ENCODE measurements at regions of chr17 and their contacts with region 1.

Region 1: GRCh38 chr17:82734987-82735866 is at the start of gene FN3K:
- DNase-seq: peak; percentile 64
- H3K4me3 ChIP-seq: peak within 1 kb of the TSS; percentile 45 to 81 (median 47)
- H3K27ac ChIP-seq: no peak within 1 kb of the TSS
- H3K4me1 ChIP-seq: no peaks in the 10 kb centered on the region
- H3K27me3 ChIP-seq: no peaks in the 10 kb centered on the region
- CTCF ChIP-seq: no peak
- POLR2A ChIP-seq: peak; percentile 59
- total RNA-seq, gene FN3K: 8.3 and 12.0 TPM in 2 replicates

Region 2: DNA sequence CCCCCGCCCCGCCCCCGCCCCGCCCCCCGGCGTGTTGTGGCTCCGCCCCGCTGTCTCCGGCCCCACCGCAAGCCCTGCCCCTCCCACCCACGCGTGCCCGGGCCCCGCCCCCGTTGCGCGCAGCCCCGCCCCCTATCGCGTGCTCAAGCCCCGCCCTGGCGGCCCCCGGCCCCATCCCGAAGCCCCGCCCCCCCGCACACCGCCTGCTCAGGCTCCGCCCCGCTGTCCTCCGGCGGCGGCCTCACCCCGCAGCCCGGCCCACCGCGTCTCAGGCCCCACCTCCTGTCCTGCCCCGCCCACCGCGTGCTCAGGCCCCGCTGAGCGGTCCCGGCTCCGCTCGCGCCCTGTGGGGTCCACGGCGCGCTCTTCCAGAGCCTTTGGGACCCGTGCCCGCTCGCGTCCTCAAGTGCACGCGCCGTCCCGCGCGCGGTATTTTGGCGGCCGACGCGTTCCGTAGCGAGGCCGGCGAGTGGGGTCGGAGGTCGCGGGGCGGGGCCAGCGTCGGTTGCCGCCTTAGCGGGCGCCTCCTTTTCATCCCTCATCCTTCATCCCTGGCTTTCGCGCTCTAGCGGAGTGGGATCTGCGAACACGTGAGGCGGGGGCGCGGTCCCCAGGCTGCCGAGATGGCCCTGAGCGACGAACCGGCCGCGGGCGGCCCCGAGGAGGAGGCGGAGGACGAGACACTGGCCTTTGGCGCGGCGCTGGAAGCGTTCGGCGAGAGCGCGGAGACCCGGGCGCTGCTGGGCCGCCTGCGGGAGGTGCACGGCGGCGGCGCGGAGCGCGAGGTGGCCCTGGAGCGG is 16.5 kb after region 1 on chr17 and contains the start of gene TBCD:
- CTCF ChIA-PET with region 1: no interaction called
- POLR2A ChIA-PET with region 1: interaction called, 3 read pairs
- dilution Hi-C with region 1: no loop called
- intact Hi-C with region 1: loop called (anchors 1 kb)
- DNase-seq: peak; percentile 90
- H3K4me3 ChIP-seq: peak within 1 kb of the TSS; percentile 67 to 84 (median 83)
- H3K27ac ChIP-seq: peak within 1 kb of the TSS; percentile 0
- H3K4me1 ChIP-seq: peaks cover 5% of the 10 kb centered on the region
- H3K27me3 ChIP-seq: no peaks in the 10 kb centered on the region
- CTCF ChIP-seq: no peak
- POLR2A ChIP-seq: no peak
- total RNA-seq, gene TBCD: 145 and 163 TPM in 2 replicates

Measured in endothelial cell of umbilical vein (primary cell).